ENCODE measurements at regions of chr2 and their contacts with region 1.

Region 1: DNA sequence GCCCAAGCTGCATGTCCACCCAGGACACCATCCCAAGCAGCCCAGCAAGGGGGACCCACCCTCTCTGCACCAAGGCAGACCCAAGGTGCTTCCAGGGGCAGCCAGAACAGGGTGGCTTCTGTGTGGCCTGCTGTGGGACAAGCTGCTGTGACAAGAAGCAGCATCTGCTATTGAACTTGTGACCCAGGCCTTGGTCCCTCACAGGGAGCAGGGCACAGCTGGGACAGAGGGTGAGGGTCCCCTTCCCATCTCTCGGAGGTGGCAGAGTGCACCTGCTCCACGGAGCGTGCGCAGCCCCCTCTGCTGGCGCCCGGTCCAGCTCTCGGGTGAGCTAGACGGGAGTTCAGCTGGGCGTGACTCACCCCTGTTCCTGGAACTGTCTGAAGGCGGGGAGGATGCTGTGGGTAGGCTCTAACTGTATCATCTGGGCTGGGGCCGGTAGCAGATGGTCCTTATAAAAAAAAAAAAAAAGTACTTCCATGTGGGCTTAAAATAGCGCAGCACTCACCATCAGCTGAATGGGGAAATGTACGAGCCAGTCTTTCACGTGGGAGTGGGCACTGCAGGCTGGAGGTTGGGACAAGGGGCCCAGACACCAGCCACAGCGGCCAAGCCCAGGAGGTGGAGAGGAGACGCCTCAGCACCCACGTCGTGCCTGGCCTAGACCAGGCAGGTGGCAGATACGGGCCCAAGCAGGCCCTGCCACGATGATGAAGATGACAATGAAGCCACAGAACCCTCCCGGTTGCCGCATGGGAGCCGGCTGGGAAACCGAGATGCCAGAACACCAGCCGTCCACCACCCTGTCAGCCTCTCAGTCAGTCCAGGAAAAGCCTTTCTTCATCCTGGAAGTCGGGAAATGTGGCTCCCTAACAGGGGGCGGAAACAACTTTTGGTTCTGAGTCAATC is 136.8 kb upstream of the ID2 start:
- DNase-seq: peak; percentile 84
- H3K4me3 Mint-ChIP-seq: no peak overlapping the region
- H3K27ac Mint-ChIP-seq: peak overlapping the region; percentile 99
- H3K4me1 Mint-ChIP-seq: peaks cover 80% of the 10 kb centered on the region
- H3K27me3 Mint-ChIP-seq: no peaks in the 10 kb centered on the region

Region 2: GRCh38 chr2:7567646-7568045 is 977.4 kb before region 1 on chr2:
- intact Hi-C with region 1: loop called (anchors 10 kb)
- DNase-seq: peak; percentile 53
- H3K4me3 Mint-ChIP-seq: peak overlapping the region; percentile 37
- H3K27ac Mint-ChIP-seq: peak overlapping the region; percentile 82
- H3K4me1 Mint-ChIP-seq: peaks cover 63% of the 10 kb centered on the region
- H3K27me3 Mint-ChIP-seq: no peaks in the 10 kb centered on the region

Region 3: GRCh38 chr2:7845332-7845731 is 699.7 kb before region 1 on chr2:
- intact Hi-C with region 1: loop called (anchors 1 kb)
- DNase-seq: no peak
- H3K4me3 Mint-ChIP-seq: no peak overlapping the region
- H3K27ac Mint-ChIP-seq: peak overlapping the region; percentile 81
- H3K4me1 Mint-ChIP-seq: peaks cover 64% of the 10 kb centered on the region
- H3K27me3 Mint-ChIP-seq: no peaks in the 10 kb centered on the region

Region 4: DNA sequence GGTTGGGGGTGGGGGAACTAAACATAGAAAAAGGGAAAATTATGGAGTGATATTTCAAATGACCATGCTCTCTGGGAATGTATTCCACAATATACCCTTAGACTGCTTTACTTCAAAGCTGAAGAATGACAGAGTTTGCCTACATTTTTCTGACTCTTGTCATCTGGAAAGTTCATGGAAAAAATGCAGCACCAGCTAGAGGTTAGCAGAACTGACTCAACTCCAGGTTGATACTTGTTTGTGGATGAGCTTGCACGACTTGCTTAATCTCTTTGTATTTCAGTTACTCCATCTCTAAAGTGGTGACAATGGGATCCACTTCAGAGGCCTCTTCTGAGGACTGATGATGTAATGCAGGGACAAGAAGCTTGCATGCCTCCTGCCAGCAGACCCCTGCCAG is 687.1 kb before region 1 on chr2:
- intact Hi-C with region 1: no loop called
- DNase-seq: no peak
- H3K4me3 Mint-ChIP-seq: no peak overlapping the region
- H3K27ac Mint-ChIP-seq: peak overlapping the region; percentile 81
- H3K4me1 Mint-ChIP-seq: peaks cover 34% of the 10 kb centered on the region
- H3K27me3 Mint-ChIP-seq: no peaks in the 10 kb centered on the region

Region 5: GRCh38 chr2:8152392-8153257 is 392.4 kb before region 1 on chr2:
- intact Hi-C with region 1: loop called (anchors 1 kb)
- DNase-seq: no peak
- H3K4me3 Mint-ChIP-seq: no peak overlapping the region
- H3K27ac Mint-ChIP-seq: no peak overlapping the region
- H3K4me1 Mint-ChIP-seq: peaks cover 42% of the 10 kb centered on the region
- H3K27me3 Mint-ChIP-seq: no peaks in the 10 kb centered on the region

Region 6: DNA sequence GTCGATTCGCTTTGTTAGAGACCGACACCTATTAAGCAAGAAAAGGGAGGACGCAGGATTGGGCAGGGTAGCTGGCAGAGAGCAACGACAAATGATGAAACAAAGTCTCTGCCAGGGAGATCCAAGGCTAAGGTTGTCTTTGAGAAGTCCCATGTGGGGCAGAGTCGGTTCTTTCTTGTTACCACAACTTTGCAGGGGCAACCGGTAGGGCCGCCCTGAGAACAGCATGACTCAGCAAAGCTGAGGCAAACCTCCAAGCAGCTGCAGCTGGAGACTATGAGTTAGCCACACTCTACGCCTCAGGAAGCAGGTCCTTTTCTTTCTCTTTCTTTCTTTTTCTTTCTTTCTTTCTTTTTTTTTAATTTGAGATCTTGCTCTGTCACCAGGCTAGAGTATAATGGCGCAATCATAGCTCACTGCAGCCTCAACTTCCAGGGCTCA is 315.5 kb before region 1 on chr2:
- intact Hi-C with region 1: no loop called
- DNase-seq: peak; percentile 34
- H3K4me3 Mint-ChIP-seq: peak overlapping the region; percentile 19
- H3K27ac Mint-ChIP-seq: peak overlapping the region; percentile 61
- H3K4me1 Mint-ChIP-seq: peaks cover 20% of the 10 kb centered on the region
- H3K27me3 Mint-ChIP-seq: peaks cover 2% of the 10 kb centered on the region

Region 7: GRCh38 chr2:8456151-8456845 is 88.7 kb before region 1 on chr2:
- intact Hi-C with region 1: loop called (anchors 1 kb)
- DNase-seq: peak; percentile 66
- H3K4me3 Mint-ChIP-seq: peak overlapping the region; percentile 58
- H3K27ac Mint-ChIP-seq: peak overlapping the region; percentile 81
- H3K4me1 Mint-ChIP-seq: peaks cover 28% of the 10 kb centered on the region
- H3K27me3 Mint-ChIP-seq: peaks cover 19% of the 10 kb centered on the region

Region 8: GRCh38 chr2:8586457-8587051 is 41.5 kb after region 1 on chr2:
- intact Hi-C with region 1: loop called (anchors 1 kb)
- DNase-seq: no peak
- H3K4me3 Mint-ChIP-seq: peak overlapping the region; percentile 26
- H3K27ac Mint-ChIP-seq: peak overlapping the region; percentile 57
- H3K4me1 Mint-ChIP-seq: peaks cover 52% of the 10 kb centered on the region
- H3K27me3 Mint-ChIP-seq: peaks cover 16% of the 10 kb centered on the region

Measured in activated T-helper 2 cell treated with anti-CD3 and anti-CD28 coated beads, Interferon-gamma antibody, Interleukin-2, Interleukin-4, amounts not matched to agents 10 μg/mL and 5 μg/mL and 100 μg/mL, durations not matched to agents 14 hours and 24 hours and 36 hours (primary cell).